ENCODE measurements at regions of chr7 and their contacts with region 1.

Region 1: DNA sequence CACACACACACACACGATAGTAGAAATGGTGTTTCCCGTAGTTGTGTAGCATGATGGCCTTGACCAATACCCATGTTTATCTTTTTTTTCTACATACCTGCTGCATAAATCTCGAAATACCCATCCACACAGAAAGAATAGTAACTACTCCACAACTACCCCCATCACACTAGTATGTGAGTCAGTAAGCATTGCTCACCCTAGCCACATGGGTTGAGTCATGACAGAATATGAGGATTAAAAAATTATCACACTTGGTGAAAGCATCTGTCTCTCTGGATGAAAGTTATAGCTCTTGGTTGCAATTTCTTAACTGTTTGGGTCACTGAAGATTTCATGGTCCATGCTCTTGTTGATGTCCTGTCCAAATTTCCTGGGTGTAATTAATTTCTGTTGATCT is 103.4 kb upstream of the MDFIC start:
- DNase-seq: no peak
- H3K4me3 Mint-ChIP-seq: no peak overlapping the region
- H3K27ac Mint-ChIP-seq: peak overlapping the region; percentile 13
- H3K4me1 Mint-ChIP-seq: peaks cover 39% of the 10 kb centered on the region
- H3K27me3 Mint-ChIP-seq: no peaks in the 10 kb centered on the region

Region 2: GRCh38 chr7:113945018-113945938 is 873.2 kb before region 1 on chr7:
- intact Hi-C with region 1: no loop called
- DNase-seq: no peak
- H3K4me3 Mint-ChIP-seq: no peak overlapping the region
- H3K27ac Mint-ChIP-seq: no peak overlapping the region
- H3K4me1 Mint-ChIP-seq: no peaks in the 10 kb centered on the region
- H3K27me3 Mint-ChIP-seq: no peaks in the 10 kb centered on the region

Region 3: DNA sequence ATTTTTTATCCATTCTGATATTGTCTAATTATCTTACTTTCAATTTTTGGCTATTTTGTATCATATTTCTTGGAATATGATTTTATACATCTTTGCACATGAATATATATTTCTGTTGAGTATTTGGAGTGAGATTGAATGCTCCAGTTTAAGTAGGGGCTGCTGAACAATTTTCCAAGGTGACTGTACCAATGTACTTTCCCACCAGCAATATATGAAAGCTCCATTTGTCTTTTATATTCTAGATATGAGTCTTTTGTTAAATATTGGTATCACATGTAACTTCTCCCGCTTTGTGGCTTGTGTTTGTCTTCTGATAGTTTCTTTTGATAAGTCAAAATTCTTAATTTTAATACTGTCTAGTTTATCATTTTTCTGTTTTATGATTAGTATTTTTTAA is 41.2 kb before region 1 on chr7:
- intact Hi-C with region 1: loop called (anchors 1 kb)
- DNase-seq: no peak
- H3K4me3 Mint-ChIP-seq: no peak overlapping the region
- H3K27ac Mint-ChIP-seq: no peak overlapping the region
- H3K4me1 Mint-ChIP-seq: peaks cover 22% of the 10 kb centered on the region
- H3K27me3 Mint-ChIP-seq: peaks cover 1% of the 10 kb centered on the region

Region 4: DNA sequence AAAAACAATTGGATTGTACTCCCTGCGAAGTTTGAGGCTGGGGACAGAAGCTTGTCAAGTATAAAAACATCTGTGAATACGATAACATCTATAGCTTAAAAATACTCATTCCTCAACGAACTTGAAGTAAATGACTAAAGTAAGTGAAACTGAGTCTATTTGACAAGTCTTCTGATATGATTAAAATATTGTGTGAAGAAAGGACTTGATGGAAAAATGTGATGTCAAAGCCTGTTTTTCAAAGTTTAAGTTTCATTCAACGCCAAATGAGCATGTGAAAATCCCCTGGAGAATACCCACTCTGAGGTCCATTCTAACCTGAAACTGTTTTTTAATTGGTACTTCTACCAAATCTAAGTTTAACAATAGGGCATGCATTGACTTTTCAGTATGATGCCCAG is 18.9 kb before region 1 on chr7:
- intact Hi-C with region 1: loop called (anchors 1 kb)
- DNase-seq: no peak
- H3K4me3 Mint-ChIP-seq: no peak overlapping the region
- H3K27ac Mint-ChIP-seq: peak overlapping the region; percentile 95
- H3K4me1 Mint-ChIP-seq: peaks cover 58% of the 10 kb centered on the region
- H3K27me3 Mint-ChIP-seq: no peaks in the 10 kb centered on the region

Region 5: DNA sequence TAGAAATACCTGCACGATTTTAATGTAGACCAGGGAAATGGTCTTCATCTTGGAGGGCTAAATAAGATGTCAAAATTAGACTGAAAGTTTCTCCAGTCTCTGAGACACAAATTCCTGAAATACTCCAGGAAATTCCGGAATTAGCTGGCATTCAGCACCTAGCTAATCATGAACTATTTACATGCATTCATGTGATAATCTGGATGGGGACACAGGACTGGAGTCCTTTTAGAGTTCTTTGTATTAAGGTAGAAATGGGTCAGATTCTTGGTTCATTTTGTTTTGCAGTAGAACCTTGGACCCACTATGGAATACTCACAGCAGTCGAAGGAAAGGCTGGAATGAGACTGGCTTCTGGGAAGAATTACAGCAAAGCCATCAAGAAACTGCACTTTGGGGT is 38.1 kb after region 1 on chr7:
- intact Hi-C with region 1: no loop called
- DNase-seq: no peak
- H3K4me3 Mint-ChIP-seq: no peak overlapping the region
- H3K27ac Mint-ChIP-seq: no peak overlapping the region
- H3K4me1 Mint-ChIP-seq: peaks cover 8% of the 10 kb centered on the region
- H3K27me3 Mint-ChIP-seq: peaks cover 1% of the 10 kb centered on the region